MCF 10A (cell line): ENCODE measurements at regions of chr18 and their contacts with region 1.

Region 1: DNA sequence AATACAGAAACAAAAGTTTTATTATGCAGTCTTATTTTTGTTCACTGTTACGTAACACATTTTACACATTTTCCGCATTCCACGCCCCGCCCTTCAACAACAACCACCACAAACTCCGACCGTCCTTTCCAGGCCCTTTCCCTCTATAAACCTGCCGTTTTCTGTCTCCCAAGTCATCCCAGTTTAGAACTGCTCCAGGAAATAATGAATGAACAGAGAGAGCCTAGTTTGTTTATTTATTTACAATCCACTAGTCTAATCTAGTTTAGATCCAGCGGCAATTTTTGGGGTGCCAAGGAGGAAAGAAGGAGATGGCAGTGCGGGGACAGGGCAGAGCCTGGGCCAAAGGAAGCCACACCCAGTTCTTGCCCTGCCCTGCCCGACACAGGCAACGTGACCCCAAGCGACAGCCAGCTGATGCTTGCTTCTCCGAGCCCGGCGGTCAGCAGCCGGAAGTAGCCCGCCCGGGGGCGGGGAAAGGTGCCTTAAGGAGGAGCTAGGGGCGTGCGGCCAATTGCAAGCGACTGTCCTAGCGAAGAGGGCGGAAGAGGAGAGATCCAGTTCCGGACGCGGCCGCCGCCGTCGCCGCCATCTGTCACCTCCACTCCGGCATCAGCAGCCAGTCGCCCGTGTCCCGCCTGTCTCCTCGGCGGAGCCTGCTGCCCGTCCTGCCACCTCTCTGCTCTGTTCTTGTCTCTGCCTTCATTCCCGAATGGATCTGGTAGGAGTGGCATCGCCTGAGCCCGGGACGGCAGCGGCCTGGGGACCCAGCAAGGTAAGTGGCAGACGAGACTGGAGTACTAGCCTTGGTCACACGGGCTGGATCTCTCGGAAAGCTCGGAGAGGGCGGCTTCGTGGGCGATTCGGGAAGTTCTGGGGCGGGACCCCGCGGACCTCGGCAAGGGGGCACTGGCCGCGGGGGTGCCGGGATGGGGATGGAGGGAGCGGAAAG is at the start of gene RIOK3:
- DNase-seq: peak; percentile 97
- H3K4me3 Mint-ChIP-seq: peak within 1 kb of the TSS; percentile 99
- H3K27ac Mint-ChIP-seq: peak within 1 kb of the TSS; percentile 98
- H3K4me1 Mint-ChIP-seq: peaks cover 30% of the 10 kb centered on the region
- H3K27me3 Mint-ChIP-seq: no peaks in the 10 kb centered on the region
- CTCF ChIP-seq: no peak
- total RNA-seq, gene RIOK3: 96.7 and 97.1 TPM in 2 replicates

Region 2: DNA sequence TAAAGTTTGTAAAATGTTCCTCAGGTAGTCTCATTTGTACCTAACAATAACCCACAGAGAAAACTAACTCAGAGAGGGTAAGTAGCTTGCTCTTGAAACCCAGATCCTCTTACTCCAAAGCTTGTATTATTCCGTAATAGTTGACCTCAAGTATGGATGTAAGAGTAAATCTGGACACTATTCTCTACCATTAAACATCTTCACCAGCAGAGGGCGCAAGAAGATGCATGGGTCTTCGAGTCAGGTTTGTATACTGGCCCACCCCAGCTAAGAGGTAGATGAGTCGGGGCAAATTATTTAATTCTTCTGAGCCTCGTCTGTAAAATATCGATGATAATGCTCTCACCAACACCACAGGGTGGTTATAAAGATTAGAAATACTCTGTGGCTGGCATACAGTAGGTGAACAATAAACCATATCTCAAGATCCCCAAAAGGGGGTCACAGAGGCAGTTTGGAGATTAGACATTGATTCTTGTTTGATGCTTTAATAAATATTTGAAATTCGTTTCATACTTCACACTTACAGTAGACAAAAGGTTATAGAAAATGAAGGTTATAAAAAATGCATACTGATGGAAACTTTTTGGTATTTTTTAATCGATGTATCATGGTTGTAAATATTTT is 321.2 kb before region 1 on chr18:
- CTCF ChIA-PET with region 1: no interaction called
- POLR2A ChIA-PET with region 1: interaction called, 21 read pairs
- intact Hi-C with region 1: no loop called
- DNase-seq: peak; percentile 90
- H3K4me3 Mint-ChIP-seq: no peak overlapping the region
- H3K27ac Mint-ChIP-seq: no peak overlapping the region
- H3K4me1 Mint-ChIP-seq: peaks cover 11% of the 10 kb centered on the region
- H3K27me3 Mint-ChIP-seq: no peaks in the 10 kb centered on the region
- CTCF ChIP-seq: peak; percentile 54

Region 3: DNA sequence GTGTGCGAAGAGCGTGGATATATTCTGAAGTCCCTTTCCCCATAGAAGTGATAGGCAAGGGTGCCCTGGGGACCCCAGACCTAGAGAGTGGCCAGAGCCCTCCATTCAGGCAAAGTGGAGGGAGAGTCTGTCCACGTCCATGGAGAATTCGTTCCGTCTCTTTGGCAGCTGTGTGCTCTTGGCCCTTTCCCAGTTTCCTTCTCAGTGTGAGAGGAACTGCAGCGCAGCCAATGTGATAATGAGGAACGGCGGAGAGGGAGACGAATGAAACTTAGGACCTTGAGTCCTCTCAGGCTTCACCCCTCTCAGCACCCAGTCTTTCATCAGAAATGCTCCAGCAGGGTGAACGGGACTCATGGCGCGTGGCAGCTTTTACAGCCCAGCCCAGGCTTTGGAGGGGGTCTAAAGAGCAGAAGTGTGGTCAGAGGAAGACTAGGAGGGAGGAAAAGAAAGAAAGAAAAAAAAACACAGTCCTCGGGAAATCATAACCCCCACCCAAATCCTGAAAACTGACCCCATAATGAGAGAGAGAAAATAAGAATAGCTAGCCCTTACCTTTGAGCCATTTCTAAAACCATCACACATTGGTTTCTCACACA is 94.9 kb before region 1 on chr18:
- CTCF ChIA-PET with region 1: no interaction called
- POLR2A ChIA-PET with region 1: no interaction called
- intact Hi-C with region 1: no loop called
- DNase-seq: no peak
- H3K4me3 Mint-ChIP-seq: no peak overlapping the region
- H3K27ac Mint-ChIP-seq: no peak overlapping the region
- H3K4me1 Mint-ChIP-seq: peaks cover 7% of the 10 kb centered on the region
- H3K27me3 Mint-ChIP-seq: no peaks in the 10 kb centered on the region
- CTCF ChIP-seq: no peak

Region 4: DNA sequence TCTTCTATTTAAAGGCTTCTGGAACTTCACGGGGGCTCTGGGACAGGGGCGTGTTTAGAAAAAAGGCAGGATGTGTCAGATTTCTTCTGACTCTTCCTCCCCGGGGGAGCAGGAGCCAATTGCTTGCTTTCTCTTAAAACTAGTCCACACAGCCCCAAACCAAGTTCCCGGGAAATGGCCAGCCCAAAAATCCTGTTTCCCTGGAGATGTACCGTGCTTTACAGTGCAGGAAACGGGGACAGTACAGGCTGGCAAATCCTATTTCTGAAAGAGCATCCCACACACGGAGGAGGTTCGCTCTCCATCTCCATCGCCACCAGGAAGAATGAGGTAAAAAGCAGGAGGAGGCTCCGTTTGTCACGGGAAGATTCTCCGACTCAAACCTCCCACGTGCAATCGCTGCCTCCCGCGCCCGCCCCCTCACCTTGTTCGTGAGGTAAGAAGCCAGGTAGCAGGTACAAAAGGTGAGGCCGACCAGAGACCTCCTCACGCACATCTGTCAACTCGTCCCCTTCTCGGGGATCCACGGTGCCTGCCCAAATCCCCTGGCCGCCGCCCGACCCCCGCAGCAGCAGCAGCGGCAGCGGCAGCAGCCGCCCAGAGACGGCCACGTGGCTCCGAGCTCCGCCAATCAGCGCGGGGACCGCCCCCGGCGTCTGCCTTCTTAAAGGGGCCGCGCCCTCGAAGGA is 15.5 kb before region 1 on chr18:
- CTCF ChIA-PET with region 1: interaction called, 3 read pairs
- POLR2A ChIA-PET with region 1: interaction called, 93 read pairs
- intact Hi-C with region 1: no loop called
- DNase-seq: peak; percentile 69
- H3K4me3 Mint-ChIP-seq: peak overlapping the region; percentile 80
- H3K27ac Mint-ChIP-seq: no peak overlapping the region
- H3K4me1 Mint-ChIP-seq: peaks cover 4% of the 10 kb centered on the region
- H3K27me3 Mint-ChIP-seq: no peaks in the 10 kb centered on the region
- CTCF ChIP-seq: no peak

Region 5: DNA sequence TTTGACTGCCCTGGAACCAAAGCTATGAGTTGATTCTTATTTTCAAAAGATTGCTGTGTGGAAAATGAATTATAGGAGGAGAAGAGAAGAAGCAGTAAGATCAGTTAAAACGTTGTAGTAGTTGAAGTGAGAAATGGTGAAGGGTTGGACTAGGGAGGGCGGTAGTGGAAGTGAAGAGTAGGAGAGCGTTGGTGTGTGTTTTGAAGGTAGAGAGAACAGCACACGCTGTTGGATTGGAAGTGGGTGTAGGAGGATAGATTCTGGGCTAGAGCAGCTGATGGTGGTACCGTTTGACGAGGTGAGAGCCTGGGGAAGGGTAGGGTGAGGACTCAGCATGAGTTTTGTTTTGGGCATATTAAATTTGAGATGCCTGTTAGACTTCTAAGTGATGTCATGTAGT is 18.5 kb after region 1 on chr18:
- CTCF ChIA-PET with region 1: interaction called, 8 read pairs
- POLR2A ChIA-PET with region 1: interaction called, 22 read pairs
- intact Hi-C with region 1: no loop called
- DNase-seq: no peak
- H3K4me3 Mint-ChIP-seq: no peak overlapping the region
- H3K27ac Mint-ChIP-seq: no peak overlapping the region
- H3K4me1 Mint-ChIP-seq: no peaks in the 10 kb centered on the region
- H3K27me3 Mint-ChIP-seq: no peaks in the 10 kb centered on the region
- CTCF ChIP-seq: no peak

Region 6: GRCh38 chr18:23487738-23488570 is 35.0 kb after region 1 on chr18:
- CTCF ChIA-PET with region 1: interaction called, 3 read pairs
- POLR2A ChIA-PET with region 1: interaction called, 11 read pairs
- intact Hi-C with region 1: no loop called
- DNase-seq: no peak
- H3K4me3 Mint-ChIP-seq: no peak overlapping the region
- H3K27ac Mint-ChIP-seq: no peak overlapping the region
- H3K4me1 Mint-ChIP-seq: peaks cover 17% of the 10 kb centered on the region
- H3K27me3 Mint-ChIP-seq: no peaks in the 10 kb centered on the region
- CTCF ChIP-seq: no peak

Region 7: GRCh38 chr18:23553887-23554286 is 100.9 kb after region 1 on chr18:
- CTCF ChIA-PET with region 1: no interaction called
- POLR2A ChIA-PET with region 1: no interaction called
- intact Hi-C with region 1: no loop called
- DNase-seq: no peak
- H3K4me3 Mint-ChIP-seq: no peak overlapping the region
- H3K27ac Mint-ChIP-seq: no peak overlapping the region
- H3K4me1 Mint-ChIP-seq: no peaks in the 10 kb centered on the region
- H3K27me3 Mint-ChIP-seq: no peaks in the 10 kb centered on the region
- CTCF ChIP-seq: no peak

Region 8: DNA sequence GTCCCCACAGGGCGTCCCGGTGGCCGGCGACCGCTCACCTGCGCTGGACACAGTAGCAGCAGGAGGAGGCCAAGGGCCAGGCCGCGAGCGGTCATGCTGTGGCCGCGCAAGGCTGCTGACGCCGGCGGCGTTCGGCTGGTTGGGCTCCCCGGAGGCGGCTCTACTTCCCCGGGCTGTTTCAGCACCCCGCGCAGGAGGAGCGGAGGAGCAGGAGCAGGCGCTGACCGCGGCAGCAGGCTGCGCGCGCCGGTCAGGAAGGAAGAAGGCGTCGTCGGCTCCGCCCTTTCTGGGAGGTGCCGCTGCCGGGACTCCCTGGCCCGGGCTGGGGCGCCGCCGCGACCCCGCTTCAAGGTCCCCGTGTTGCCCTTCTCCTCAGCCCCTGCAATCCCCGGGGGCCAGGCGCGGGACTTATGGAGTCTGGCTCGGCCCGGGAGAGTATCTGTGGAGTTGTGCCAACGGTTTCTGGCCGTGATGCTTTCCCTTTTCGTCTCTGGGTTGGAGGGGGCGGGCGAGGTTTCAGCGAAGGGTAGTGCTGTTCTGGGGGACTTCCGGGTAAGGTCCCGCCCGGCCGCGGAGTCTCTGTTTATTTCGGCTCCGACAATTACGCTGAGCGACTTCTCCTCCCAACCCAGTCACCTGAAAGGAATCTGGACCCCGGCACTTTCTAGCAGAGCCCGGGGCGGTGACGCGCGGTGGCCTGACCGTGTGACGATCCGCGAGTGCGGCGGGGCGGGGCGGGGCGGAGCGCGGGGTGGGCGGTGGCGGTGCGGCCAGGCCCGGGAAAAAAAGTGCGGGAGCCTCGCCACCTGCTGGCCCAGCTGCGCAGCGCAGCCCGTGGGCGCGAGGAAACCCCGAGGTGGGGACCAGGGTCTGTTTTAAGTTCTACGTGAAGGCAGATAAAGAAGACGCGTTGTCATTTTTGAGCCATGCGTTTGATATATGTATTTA is 133.5 kb after region 1 on chr18 and contains the start of gene NPC1:
- CTCF ChIA-PET with region 1: no interaction called
- POLR2A ChIA-PET with region 1: interaction called, 29 read pairs
- intact Hi-C with region 1: no loop called
- DNase-seq: peak; percentile 93
- H3K4me3 Mint-ChIP-seq: peak within 1 kb of the TSS; percentile 84
- H3K27ac Mint-ChIP-seq: peak within 1 kb of the TSS; percentile 98
- H3K4me1 Mint-ChIP-seq: peaks cover 13% of the 10 kb centered on the region
- H3K27me3 Mint-ChIP-seq: no peaks in the 10 kb centered on the region
- CTCF ChIP-seq: peak; percentile 90
- total RNA-seq, gene NPC1: 60.4 and 78.8 TPM in 2 replicates